HepG2 (cell line): ENCODE measurements at regions of chr18 and their contacts with region 1.

Region 1: DNA sequence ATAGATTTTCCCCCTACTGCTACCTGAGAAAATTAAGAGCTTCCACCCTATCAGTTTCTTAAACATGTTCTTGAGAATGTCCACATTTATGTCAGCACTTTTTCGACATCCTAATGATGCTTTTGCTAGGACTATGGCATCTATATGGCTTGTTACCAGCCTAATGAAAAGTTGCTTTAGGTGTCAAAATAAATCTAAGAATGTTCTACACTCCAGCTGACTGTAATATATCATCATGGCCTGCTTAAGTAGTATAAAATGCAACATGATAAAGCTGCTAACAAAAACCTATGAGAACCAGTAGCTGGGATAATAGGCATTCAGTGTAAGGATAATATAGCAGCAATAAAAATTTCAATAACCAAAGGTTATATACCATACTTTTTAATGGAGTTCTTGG is 1983.5 kb upstream of the CELF4 start:
- DNase-seq: no peak
- ATAC-seq: no peak
- H3K4me3 ChIP-seq: no peak overlapping the region
- H3K27ac ChIP-seq: no peak overlapping the region
- H3K4me1 ChIP-seq: no peaks in the 10 kb centered on the region
- H3K27me3 ChIP-seq: no peaks in the 10 kb centered on the region
- CTCF ChIP-seq: no peak
- EP300 ChIP-seq: no peak
- POLR2A ChIP-seq: no peak
- RAD21 ChIP-seq: no peak

Region 2: GRCh38 chr18:39178156-39178555 is 371.0 kb before region 1 on chr18:
- CTCF ChIA-PET with region 1: no interaction called
- POLR2A ChIA-PET with region 1: no interaction called
- in situ Hi-C with region 1: no loop called
- intact Hi-C with region 1: loop called (anchors 5 kb)
- DNase-seq: no peak
- ATAC-seq: no peak
- H3K4me3 ChIP-seq: no peak overlapping the region
- H3K27ac ChIP-seq: no peak overlapping the region
- H3K4me1 ChIP-seq: no peaks in the 10 kb centered on the region
- H3K27me3 ChIP-seq: no peaks in the 10 kb centered on the region
- CTCF ChIP-seq: no peak
- EP300 ChIP-seq: no peak
- POLR2A ChIP-seq: no peak
- RAD21 ChIP-seq: no peak

Region 3: DNA sequence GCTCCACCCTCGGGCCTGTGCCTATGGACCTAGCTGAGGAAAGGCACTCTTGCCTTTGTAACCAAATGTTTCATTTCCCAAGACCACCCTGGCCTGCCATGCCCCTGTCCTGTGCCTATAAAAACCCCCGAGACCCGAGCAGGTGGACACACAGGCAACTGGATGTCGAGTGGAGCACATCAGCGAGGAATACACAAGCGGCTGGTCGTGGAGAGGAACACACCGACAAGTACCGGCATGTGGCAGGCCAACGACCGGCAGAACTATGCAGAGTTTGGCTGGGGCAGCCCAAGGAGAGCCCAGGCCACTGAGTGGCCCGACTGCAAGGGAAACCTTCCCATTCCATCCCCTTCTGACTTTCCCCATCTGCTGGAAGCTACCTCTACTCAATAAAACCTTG is 19.8 kb before region 1 on chr18:
- CTCF ChIA-PET with region 1: no interaction called
- POLR2A ChIA-PET with region 1: no interaction called
- in situ Hi-C with region 1: no loop called
- intact Hi-C with region 1: no loop called
- DNase-seq: no peak
- ATAC-seq: no peak
- H3K4me3 ChIP-seq: no peak overlapping the region
- H3K27ac ChIP-seq: no peak overlapping the region
- H3K4me1 ChIP-seq: no peaks in the 10 kb centered on the region
- H3K27me3 ChIP-seq: no peaks in the 10 kb centered on the region
- CTCF ChIP-seq: no peak
- EP300 ChIP-seq: no peak
- POLR2A ChIP-seq: no peak
- RAD21 ChIP-seq: no peak

Region 4: GRCh38 chr18:39611381-39612100 is 62.4 kb after region 1 on chr18:
- CTCF ChIA-PET with region 1: no interaction called
- POLR2A ChIA-PET with region 1: no interaction called
- in situ Hi-C with region 1: no loop called
- intact Hi-C with region 1: no loop called
- DNase-seq: no peak
- ATAC-seq: no peak
- H3K4me3 ChIP-seq: no peak overlapping the region
- H3K27ac ChIP-seq: no peak overlapping the region
- H3K4me1 ChIP-seq: peaks cover 6% of the 10 kb centered on the region; the same call in 1 of the 2 replicates
- H3K27me3 ChIP-seq: no peaks in the 10 kb centered on the region
- CTCF ChIP-seq: no peak
- EP300 ChIP-seq: no peak
- POLR2A ChIP-seq: no peak
- RAD21 ChIP-seq: no peak

Region 5: DNA sequence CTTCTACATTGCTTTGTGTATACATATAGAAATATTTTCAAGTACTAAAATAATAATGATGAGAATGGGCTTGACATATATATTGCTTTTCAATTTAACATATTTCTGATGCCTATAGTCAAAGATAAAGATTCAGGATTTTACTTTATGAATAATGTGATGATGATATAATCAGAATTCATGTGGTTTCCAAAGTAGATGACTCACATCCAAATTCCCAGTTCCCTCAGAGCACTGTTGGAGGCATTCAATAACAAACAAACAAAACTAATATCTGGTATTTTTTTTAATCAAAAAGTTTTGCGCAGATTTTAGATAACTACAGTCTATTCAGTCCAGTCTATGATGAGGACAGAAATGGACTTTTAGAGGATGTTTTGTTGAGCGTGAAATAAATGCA is 111.0 kb after region 1 on chr18:
- CTCF ChIA-PET with region 1: no interaction called
- POLR2A ChIA-PET with region 1: no interaction called
- in situ Hi-C with region 1: no loop called
- intact Hi-C with region 1: no loop called
- DNase-seq: no peak
- ATAC-seq: no peak
- H3K4me3 ChIP-seq: no peak overlapping the region
- H3K27ac ChIP-seq: no peak overlapping the region
- H3K4me1 ChIP-seq: no peaks in the 10 kb centered on the region
- H3K27me3 ChIP-seq: no peaks in the 10 kb centered on the region
- CTCF ChIP-seq: no peak
- EP300 ChIP-seq: no peak
- POLR2A ChIP-seq: no peak
- RAD21 ChIP-seq: no peak